Spleen (tissue), 13 donors: ENCODE measurements at regions of chrX and their contacts with region 1.

Region 1: GRCh38 chrX:110146521-110146920 is 143.6 kb downstream of the TMEM164 start:
- DNase-seq: no peak
- H3K4me3 ChIP-seq: no peak overlapping the region
- H3K27ac ChIP-seq: no peak overlapping the region
- H3K4me1 ChIP-seq: peaks cover 0 to 13% (median 7%) of the 10 kb centered on the region in 6 donors
- H3K27me3 ChIP-seq: no peaks in the 10 kb centered on the region
- CTCF ChIP-seq: peak in 10 of 11 experiments; percentile 34 to 71 (median 60)
- POLR2A ChIP-seq: no peak

Region 2: GRCh38 chrX:109902665-109903064 is 243.9 kb before region 1 on chrX:
- intact Hi-C with region 1: loop called (anchors 10 kb)
- DNase-seq: no peak
- H3K4me3 ChIP-seq: no peak overlapping the region
- H3K27ac ChIP-seq: no peak overlapping the region
- H3K4me1 ChIP-seq: no peaks in the 10 kb centered on the region
- H3K27me3 ChIP-seq: no peaks in the 10 kb centered on the region
- CTCF ChIP-seq: no peak
- POLR2A ChIP-seq: no peak